Adrenal gland (tissue), 19 donors: ENCODE measurements at regions of chr12 and their contacts with region 1.

Region 1: GRCh38 chr12:122752464-122753318 is at the start of gene DENR:
- DNase-seq: peak; percentile 98 to 99 (median 99)
- H3K4me3 ChIP-seq: peak within 1 kb of the TSS; percentile 45 to 85 (median 62)
- H3K27ac ChIP-seq: peak within 1 kb of the TSS in 4 of 5 donors; percentile 72 to 94 (median 76)
- H3K4me1 ChIP-seq: peaks cover 9 to 10% of the 10 kb centered on the region in 2 donors
- H3K27me3 ChIP-seq: no peaks in the 10 kb centered on the region
- CTCF ChIP-seq: peak; percentile 59 to 91 (median 82)
- POLR2A ChIP-seq: peak; percentile 77 to 81
- total RNA-seq, gene DENR: 16.5 to 50.4 (median 32.1) TPM

Region 2: GRCh38 chr12:122374707-122375106 is 378.0 kb before region 1 on chr12:
- intact Hi-C with region 1: no loop called
- DNase-seq: peak in 1 of 7 donors; percentile 52
- H3K4me3 ChIP-seq: no peak overlapping the region
- H3K27ac ChIP-seq: peak overlapping the region in 2 of 5 donors; percentile 44 to 51
- H3K4me1 ChIP-seq: peaks cover 4 to 9% of the 10 kb centered on the region in 2 donors
- H3K27me3 ChIP-seq: no peaks in the 10 kb centered on the region
- CTCF ChIP-seq: no peak
- POLR2A ChIP-seq: no peak

Region 3: GRCh38 chr12:122635471-122635870 is 117.2 kb before region 1 on chr12:
- intact Hi-C with region 1: loop called in 1 of 2 experiments (anchors 5 kb)
- DNase-seq: no peak
- H3K4me3 ChIP-seq: no peak overlapping the region
- H3K27ac ChIP-seq: no peak overlapping the region
- H3K4me1 ChIP-seq: no peaks in the 10 kb centered on the region
- H3K27me3 ChIP-seq: no peaks in the 10 kb centered on the region
- CTCF ChIP-seq: no peak
- POLR2A ChIP-seq: no peak